HepG2 (cell line): ENCODE measurements at regions of chr3 and their contacts with region 1.

Region 1: DNA sequence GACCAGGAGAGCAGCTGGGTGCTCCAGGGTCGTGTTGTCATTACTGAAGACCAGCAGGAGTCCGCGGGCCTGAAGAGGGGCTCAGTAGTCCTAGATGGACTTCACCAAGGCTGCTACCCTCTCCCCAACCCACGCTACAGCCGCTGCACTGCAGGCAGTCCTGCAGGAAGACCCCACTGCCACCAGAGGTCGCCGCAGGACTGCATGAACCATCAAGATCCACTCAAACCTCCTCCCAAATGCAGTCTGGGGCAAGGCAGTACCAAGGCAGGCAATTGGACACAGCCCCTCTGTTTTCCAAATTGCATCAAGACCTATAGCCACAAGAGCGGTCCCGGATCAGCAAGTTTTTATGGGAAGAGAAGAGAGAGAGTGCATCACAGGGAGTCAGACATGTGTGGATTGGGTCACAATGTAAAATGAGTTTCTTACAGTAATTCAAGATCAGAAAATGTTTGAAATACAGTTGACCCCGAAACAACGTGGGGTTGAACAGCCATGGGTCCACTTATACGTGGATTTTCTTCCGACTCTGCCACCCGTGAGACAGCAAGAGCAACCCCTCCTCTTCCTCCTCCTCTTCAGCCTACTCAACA is 46.7 kb downstream of the DZIP1L start:
- DNase-seq: peak; percentile 53
- ATAC-seq: peak; percentile 95
- H3K4me3 ChIP-seq: no peak overlapping the region
- H3K27ac ChIP-seq: no peak overlapping the region
- H3K4me1 ChIP-seq: no peaks in the 10 kb centered on the region
- H3K27me3 ChIP-seq: no peaks in the 10 kb centered on the region
- CTCF ChIP-seq: peak; percentile 98
- EP300 ChIP-seq: no peak
- POLR2A ChIP-seq: no peak
- RAD21 ChIP-seq: peak; percentile 91

Region 2: GRCh38 chr3:138118612-138119422 is 50.1 kb after region 1 on chr3:
- CTCF ChIA-PET with region 1: interaction called, 64 read pairs
- POLR2A ChIA-PET with region 1: interaction called, 3 read pairs
- in situ Hi-C with region 1: loop called (anchors 5 kb)
- intact Hi-C with region 1: loop called (anchors 1 kb)
- DNase-seq: peak; percentile 70
- ATAC-seq: peak; percentile 75
- H3K4me3 ChIP-seq: no peak overlapping the region; a peak in 1 of 6 replicates
- H3K27ac ChIP-seq: no peak overlapping the region
- H3K4me1 ChIP-seq: peaks cover 21% of the 10 kb centered on the region
- H3K27me3 ChIP-seq: no peaks in the 10 kb centered on the region; a peak in 3 of 5 replicates
- CTCF ChIP-seq: peak; percentile 95
- EP300 ChIP-seq: no peak
- POLR2A ChIP-seq: no peak
- RAD21 ChIP-seq: peak; percentile 78

Region 3: GRCh38 chr3:138547342-138547975 is 478.8 kb after region 1 on chr3:
- CTCF ChIA-PET with region 1: no interaction called
- POLR2A ChIA-PET with region 1: no interaction called
- in situ Hi-C with region 1: no loop called
- intact Hi-C with region 1: no loop called
- DNase-seq: no peak
- ATAC-seq: no peak
- H3K4me3 ChIP-seq: no peak overlapping the region
- H3K27ac ChIP-seq: no peak overlapping the region
- H3K4me1 ChIP-seq: no peaks in the 10 kb centered on the region
- H3K27me3 ChIP-seq: no peaks in the 10 kb centered on the region
- CTCF ChIP-seq: no peak
- EP300 ChIP-seq: no peak
- POLR2A ChIP-seq: no peak
- RAD21 ChIP-seq: no peak

Region 4: GRCh38 chr3:138712086-138712485 is 643.4 kb after region 1 on chr3:
- CTCF ChIA-PET with region 1: no interaction called
- POLR2A ChIA-PET with region 1: no interaction called
- in situ Hi-C with region 1: no loop called
- intact Hi-C with region 1: no loop called
- DNase-seq: no peak
- ATAC-seq: no peak
- H3K4me3 ChIP-seq: no peak overlapping the region
- H3K27ac ChIP-seq: no peak overlapping the region
- H3K4me1 ChIP-seq: no peaks in the 10 kb centered on the region
- H3K27me3 ChIP-seq: no peaks in the 10 kb centered on the region
- CTCF ChIP-seq: no peak
- EP300 ChIP-seq: no peak
- POLR2A ChIP-seq: no peak
- RAD21 ChIP-seq: no peak